ENCODE measurements at regions of chr10 and their contacts with region 1.

Region 1: DNA sequence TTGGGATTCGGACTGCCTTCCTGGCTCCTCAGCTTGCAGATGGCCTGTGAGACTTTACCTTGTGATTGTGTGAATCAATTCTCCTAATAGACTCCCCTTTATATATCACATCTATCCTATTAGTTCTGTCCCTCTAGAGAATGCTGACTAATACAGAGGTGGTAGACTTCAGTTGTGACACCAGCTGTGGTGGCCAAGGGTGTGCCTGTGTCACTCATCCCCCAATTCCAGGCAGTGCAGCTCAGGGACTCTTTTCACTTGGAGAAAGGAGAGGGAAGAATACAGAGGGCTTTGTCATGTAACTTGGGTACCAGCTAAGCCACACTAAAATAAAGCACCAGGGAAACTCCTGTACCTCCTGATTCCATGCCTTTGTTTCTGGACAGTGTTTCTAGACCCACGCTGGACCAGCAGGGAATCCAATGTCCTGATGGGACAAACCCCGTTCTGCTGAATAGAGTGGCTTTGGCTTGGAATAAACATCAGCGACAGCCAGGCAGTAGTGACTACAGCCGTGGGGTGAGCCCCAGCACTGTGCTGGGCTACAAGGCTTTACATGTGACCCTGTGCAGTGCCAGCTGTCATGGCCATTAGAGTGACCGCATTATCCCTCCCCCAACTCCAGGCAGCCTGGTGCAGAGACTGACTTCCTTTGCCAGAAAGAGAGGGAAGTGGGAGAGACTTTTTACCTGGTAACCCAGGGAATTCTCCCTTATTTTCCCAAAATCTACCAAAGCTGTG is 233.6 kb downstream of the ANK3 start:
- DNase-seq: no peak
- H3K4me3 Mint-ChIP-seq: no peak overlapping the region
- H3K27ac Mint-ChIP-seq: no peak overlapping the region
- H3K4me1 Mint-ChIP-seq: peaks cover 8% of the 10 kb centered on the region
- H3K27me3 Mint-ChIP-seq: no peaks in the 10 kb centered on the region
- CTCF ChIP-seq: no peak

Region 2: GRCh38 chr10:60123172-60124067 is 32.7 kb before region 1 on chr10:
- CTCF ChIA-PET with region 1: no interaction called
- intact Hi-C with region 1: loop called (anchors 2 kb)
- DNase-seq: peak; percentile 60
- H3K4me3 Mint-ChIP-seq: peak overlapping the region; percentile 36
- H3K27ac Mint-ChIP-seq: peak overlapping the region; percentile 85
- H3K4me1 Mint-ChIP-seq: peaks cover 22% of the 10 kb centered on the region
- H3K27me3 Mint-ChIP-seq: no peaks in the 10 kb centered on the region
- CTCF ChIP-seq: no peak